HepG2 (cell line): ENCODE measurements at regions of chr15 and their contacts with region 1.

Region 1: DNA sequence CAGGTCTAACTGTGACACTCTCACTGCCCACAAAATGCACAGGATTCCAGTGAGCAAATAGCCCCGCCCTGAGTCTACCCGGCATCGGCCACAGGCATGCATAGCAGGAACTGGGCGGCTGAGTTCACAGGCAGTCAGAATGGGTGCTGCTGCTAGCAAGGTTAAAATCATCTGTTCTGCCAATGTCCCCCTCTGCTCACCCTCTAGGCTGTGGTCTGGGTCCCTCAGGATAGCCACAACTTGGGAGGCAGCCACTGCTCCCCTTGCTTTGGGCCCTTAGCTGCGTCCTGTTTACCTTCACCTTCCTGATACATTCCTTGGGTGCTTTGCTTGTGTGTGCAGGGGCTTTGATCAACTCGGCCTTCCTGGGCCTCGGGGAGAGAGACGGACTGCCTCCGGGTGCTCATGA is 232.9 kb upstream of the RGMA start:
- DNase-seq: peak; percentile 78
- ATAC-seq: peak; percentile 99
- H3K4me3 ChIP-seq: peak overlapping the region in 2 of 3 experiments; percentile 44 to 54; a peak in 4 of 6 replicates
- H3K27ac ChIP-seq: no peak overlapping the region
- H3K4me1 ChIP-seq: peaks cover 21% of the 10 kb centered on the region
- H3K27me3 ChIP-seq: no peaks in the 10 kb centered on the region; a peak in 1 of 5 replicates
- CTCF ChIP-seq: 0 out of 2 replicates have a peak, but pooled peaks have one; percentile 13
- EP300 ChIP-seq: no peak
- POLR2A ChIP-seq: no peak
- RAD21 ChIP-seq: no peak

Region 2: GRCh38 chr15:93341164-93341563 is 19.3 kb after region 1 on chr15:
- CTCF ChIA-PET with region 1: no interaction called
- POLR2A ChIA-PET with region 1: interaction called, 11 read pairs
- in situ Hi-C with region 1: no loop called
- intact Hi-C with region 1: loop called (anchors 2 kb)
- DNase-seq: peak; percentile 95
- ATAC-seq: peak; percentile 93
- H3K4me3 ChIP-seq: no peak overlapping the region
- H3K27ac ChIP-seq: peak overlapping the region; percentile 48
- H3K4me1 ChIP-seq: peaks cover 28% of the 10 kb centered on the region
- H3K27me3 ChIP-seq: no peaks in the 10 kb centered on the region
- CTCF ChIP-seq: no peak
- EP300 ChIP-seq: peak; percentile 63 to 90; a peak in 3 of 4 replicates
- POLR2A ChIP-seq: no peak
- RAD21 ChIP-seq: no peak

Region 3: DNA sequence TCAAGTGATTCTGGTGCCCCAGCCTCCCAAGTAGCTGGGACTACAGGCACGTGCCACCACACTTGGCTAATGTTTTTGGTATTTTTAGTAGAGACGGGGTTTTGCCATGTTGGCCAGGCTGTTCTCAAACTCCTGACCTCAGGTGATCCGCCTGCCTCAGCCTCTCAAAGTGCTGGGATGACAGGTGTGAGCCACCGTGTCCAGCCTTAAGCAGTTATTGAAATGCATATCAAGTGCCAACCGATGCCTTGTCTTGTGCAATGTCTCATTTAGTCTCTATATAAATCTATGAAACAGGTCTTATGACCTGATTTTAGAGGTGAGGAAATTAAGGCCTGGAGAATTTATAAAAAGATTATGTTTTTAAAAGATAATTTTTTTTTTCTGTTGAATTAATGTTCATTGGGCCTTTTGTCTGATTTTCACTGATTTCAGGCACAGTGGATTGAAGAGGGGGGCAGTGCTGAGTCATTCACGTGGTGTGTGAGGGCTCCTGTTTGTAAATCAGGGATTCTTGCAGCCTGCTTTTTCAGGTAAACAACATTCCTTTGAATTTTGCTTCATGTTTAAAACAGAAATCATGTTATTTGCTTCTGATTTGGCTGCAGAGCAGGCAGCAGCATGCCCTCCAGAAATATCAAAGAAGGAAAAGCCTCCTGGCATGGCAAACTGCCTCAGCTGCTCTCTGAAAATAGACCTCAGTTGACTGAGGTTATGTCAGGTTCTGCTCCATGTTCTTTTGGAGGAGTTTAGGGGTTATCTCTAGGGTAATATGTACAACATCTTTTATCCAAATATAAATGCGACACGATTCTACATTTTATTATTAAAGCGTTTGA is 174.1 kb after region 1 on chr15:
- CTCF ChIA-PET with region 1: no interaction called
- POLR2A ChIA-PET with region 1: no interaction called
- in situ Hi-C with region 1: no loop called
- intact Hi-C with region 1: no loop called
- DNase-seq: no peak
- ATAC-seq: no peak
- H3K4me3 ChIP-seq: no peak overlapping the region
- H3K27ac ChIP-seq: no peak overlapping the region
- H3K4me1 ChIP-seq: no peaks in the 10 kb centered on the region
- H3K27me3 ChIP-seq: no peaks in the 10 kb centered on the region
- CTCF ChIP-seq: no peak
- EP300 ChIP-seq: no peak
- POLR2A ChIP-seq: no peak
- RAD21 ChIP-seq: no peak